Activated CD4-positive, alpha-beta memory T cell treated with anti-CD3 and anti-CD28 coated beads for 36 hours (primary cell): ENCODE measurements at regions of chr18 and their contacts with region 1.

Region 1: GRCh38 chr18:63320046-63320689 is 599 bp upstream of the BCL2 start:
- DNase-seq: peak; percentile 89
- H3K4me3 Mint-ChIP-seq: peak overlapping the region; percentile 83
- H3K27ac Mint-ChIP-seq: peak overlapping the region; percentile 83
- H3K4me1 Mint-ChIP-seq: peaks cover 26% of the 10 kb centered on the region
- H3K27me3 Mint-ChIP-seq: no peaks in the 10 kb centered on the region

Region 2: DNA sequence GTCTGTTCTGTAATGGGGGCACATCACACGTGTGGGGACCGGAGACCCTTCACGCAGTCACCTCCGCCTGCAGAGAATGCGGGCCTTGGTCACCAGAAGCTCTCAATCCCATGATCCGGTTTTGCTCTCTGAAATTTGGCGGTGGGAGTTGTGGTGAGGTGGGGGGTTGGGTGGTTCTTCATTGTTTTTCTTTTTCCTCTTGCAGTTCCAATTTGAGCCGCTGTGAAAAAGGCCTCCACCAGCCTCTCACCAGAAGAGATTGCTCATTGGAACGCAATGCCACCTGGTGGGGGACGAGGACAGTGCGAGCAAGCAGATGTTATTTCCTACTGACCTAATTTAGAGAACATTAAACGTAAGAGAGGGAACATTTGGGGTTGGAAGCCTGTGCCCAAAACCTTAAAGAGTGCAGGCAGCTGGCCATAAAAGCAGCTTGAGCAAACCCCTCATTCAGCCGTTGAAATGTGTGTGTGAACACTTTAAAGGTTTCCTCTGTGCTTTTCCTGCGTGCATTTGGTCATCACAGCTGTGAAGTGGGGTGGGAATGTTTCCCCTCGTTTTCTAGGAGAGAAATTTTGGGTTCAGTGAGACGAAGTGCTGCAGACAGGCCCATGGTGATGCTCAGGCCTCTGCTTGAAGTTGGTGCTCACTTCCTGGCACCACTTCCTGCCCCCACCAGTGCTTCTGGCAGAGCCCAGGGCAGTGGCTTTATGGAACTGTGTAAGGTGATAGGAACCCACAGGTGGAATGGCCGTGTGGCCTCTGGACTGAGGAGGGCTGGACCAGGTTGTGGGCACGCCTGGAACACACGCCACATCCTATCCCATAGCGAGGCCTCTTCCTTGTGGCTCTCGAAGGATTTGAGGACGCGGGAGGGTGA is 735.7 kb before region 1 on chr18:
- CTCF ChIA-PET with region 1: no interaction called
- POLR2A ChIA-PET with region 1: no interaction called
- intact Hi-C with region 1: loop called (anchors 5 kb)
- DNase-seq: peak; percentile 91
- H3K4me3 Mint-ChIP-seq: no peak overlapping the region
- H3K27ac Mint-ChIP-seq: peak overlapping the region; percentile 94
- H3K4me1 Mint-ChIP-seq: peaks cover 39% of the 10 kb centered on the region
- H3K27me3 Mint-ChIP-seq: no peaks in the 10 kb centered on the region

Region 3: DNA sequence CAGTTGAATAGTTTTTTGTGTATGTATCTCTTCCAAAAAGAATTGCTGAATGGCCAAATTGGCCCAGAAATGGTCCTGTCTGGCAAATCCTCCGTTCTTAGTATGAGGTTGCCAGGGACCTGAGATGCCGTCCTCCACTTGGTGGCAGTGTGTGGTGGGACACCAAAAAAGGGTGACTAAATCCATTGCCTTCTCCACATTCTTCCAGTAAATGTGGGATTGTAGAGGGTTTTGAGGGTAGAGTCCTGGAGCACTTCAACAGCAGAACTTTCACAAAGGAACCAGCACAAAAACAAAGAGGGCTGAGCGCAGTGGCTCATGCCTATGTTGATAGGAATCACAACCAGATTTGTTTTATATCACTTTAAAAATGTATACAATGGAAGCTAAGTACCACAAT is 200.5 kb before region 1 on chr18:
- CTCF ChIA-PET with region 1: interaction called, 19 read pairs
- POLR2A ChIA-PET with region 1: no interaction called
- intact Hi-C with region 1: loop called (anchors 1 kb)
- DNase-seq: peak; percentile 55
- H3K4me3 Mint-ChIP-seq: no peak overlapping the region
- H3K27ac Mint-ChIP-seq: no peak overlapping the region
- H3K4me1 Mint-ChIP-seq: peaks cover 10% of the 10 kb centered on the region
- H3K27me3 Mint-ChIP-seq: peaks cover 4% of the 10 kb centered on the region

Region 4: DNA sequence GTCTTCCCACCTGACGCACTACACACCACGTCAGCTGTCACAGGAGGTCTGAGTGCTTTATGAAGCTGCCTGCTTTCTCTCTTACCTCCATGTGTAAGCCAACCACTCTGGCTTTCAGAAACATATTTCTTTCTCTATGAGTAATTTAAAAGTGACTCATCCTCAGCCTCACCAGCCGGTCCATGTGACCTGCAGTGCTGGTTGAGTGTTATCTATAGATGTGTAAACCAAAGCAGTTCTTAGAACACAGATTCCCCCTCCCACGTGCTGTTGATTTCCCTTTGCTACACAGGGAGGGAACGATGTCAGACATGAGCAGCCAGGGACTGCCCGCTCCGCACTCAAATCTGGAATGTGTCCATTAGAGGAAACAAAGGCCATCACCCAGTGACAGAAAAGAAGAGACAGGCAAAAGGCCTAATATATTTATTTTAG is 158.4 kb before region 1 on chr18:
- CTCF ChIA-PET with region 1: interaction called, 101 read pairs
- POLR2A ChIA-PET with region 1: interaction called, 35 read pairs
- intact Hi-C with region 1: loop called (anchors 1 kb)
- DNase-seq: peak; percentile 90
- H3K4me3 Mint-ChIP-seq: peak overlapping the region; percentile 78
- H3K27ac Mint-ChIP-seq: peak overlapping the region; percentile 98
- H3K4me1 Mint-ChIP-seq: peaks cover 92% of the 10 kb centered on the region
- H3K27me3 Mint-ChIP-seq: no peaks in the 10 kb centered on the region

Region 5: DNA sequence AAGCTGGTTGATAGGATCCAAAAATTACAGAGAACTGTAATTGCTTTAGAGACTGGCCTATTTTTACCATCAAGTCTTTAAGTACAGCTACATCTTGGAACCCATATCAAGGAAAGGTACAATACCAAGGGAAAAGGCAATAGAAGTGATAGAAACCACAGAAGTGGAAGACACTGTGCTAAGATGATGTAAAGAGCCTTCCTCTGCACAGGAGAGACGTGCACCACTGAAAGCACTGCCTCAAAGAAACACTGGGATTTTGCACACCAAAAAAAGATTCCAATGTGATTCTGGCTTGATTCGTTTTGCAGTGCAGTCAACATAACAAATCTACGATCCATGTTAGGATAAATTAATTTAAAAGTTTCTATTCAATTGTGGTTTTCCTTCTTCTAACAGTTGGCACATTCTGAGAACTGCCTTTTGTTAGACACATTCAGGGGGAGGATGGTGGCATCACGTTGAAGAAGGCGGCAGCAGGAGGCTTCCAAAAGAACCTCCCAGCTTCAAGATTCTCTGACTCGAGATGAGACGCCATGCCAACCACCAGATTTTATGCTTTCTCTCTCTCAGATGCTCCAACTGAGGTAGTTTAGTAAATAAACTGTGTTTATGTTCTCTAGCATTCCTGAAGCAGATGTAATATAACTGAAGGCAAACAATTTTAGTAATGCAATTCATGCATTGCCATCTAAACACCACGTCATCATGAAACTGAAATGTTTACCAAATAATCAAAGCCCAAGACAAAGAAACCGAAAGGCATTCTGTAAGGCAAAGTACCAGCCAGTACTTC is 103.5 kb before region 1 on chr18:
- CTCF ChIA-PET with region 1: interaction called, 31 read pairs
- POLR2A ChIA-PET with region 1: interaction called, 9 read pairs
- intact Hi-C with region 1: loop called (anchors 1 kb)
- DNase-seq: peak; percentile 50
- H3K4me3 Mint-ChIP-seq: peak overlapping the region; percentile 64
- H3K27ac Mint-ChIP-seq: peak overlapping the region; percentile 93
- H3K4me1 Mint-ChIP-seq: peaks cover 95% of the 10 kb centered on the region
- H3K27me3 Mint-ChIP-seq: no peaks in the 10 kb centered on the region

Region 6: DNA sequence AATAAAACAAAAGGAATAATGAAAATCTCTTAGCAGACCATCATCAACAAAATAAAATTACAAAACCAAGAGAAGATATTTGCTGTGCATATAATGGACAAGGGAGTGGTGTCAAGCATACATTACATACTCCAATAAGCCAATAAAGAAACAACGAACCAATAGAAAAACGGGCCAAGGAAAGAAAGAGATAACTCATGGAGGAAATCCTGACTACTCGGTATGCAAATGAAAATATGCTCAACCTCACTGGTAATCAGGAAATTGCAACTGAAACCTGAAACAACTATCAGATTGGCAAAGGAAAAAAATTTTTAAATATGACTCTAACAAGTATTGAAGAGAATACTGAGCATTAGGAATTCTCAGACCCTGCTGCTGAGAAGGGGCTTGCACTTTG is 85.3 kb before region 1 on chr18:
- CTCF ChIA-PET with region 1: no interaction called
- POLR2A ChIA-PET with region 1: no interaction called
- intact Hi-C with region 1: no loop called
- DNase-seq: no peak
- H3K4me3 Mint-ChIP-seq: no peak overlapping the region
- H3K27ac Mint-ChIP-seq: peak overlapping the region; percentile 21
- H3K4me1 Mint-ChIP-seq: peaks cover 78% of the 10 kb centered on the region
- H3K27me3 Mint-ChIP-seq: no peaks in the 10 kb centered on the region

Region 7: GRCh38 chr18:63286926-63287325 is 33.2 kb before region 1 on chr18:
- CTCF ChIA-PET with region 1: interaction called, 15 read pairs
- POLR2A ChIA-PET with region 1: no interaction called
- intact Hi-C with region 1: loop called (anchors 1 kb)
- DNase-seq: no peak
- H3K4me3 Mint-ChIP-seq: no peak overlapping the region
- H3K27ac Mint-ChIP-seq: no peak overlapping the region
- H3K4me1 Mint-ChIP-seq: peaks cover 56% of the 10 kb centered on the region
- H3K27me3 Mint-ChIP-seq: no peaks in the 10 kb centered on the region

Region 8: DNA sequence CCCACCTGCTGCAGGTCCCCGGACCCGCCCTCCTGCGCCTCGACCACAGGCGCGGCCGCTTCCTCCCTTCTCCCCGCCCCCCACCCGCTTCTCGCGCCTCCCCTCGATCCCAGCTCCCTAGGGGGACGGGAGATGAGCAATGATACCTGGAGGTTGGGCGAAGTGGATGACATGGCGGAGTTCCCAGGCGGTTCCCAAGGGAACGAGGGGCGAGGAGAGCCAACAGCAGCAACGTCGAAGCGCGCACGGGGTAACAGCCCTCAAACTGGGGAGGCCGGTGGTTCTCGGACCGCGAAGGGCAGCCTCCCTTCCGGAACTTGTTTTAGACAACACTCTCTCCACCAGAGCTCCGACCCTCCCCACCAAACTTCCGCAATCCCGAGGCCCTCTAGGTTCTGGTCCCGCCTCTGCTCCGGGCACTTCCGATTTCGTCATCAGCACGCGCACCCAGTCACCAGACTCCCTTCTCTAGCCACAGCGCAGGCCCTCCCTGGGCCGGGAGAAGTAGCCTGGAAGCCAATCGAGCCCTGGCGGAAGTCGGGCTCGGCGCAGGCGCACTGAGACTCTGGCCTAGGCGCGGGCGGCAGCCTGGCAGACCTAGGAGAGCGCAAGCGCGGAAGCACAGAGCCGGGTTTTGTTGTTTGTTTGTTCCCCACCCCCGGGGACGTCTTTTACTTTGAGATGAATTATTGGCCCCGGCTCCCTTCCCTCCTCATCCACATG is 102.1 kb after region 1 on chr18 and contains the start of gene VPS4B:
- CTCF ChIA-PET with region 1: no interaction called
- POLR2A ChIA-PET with region 1: no interaction called
- intact Hi-C with region 1: loop called (anchors 1 kb)
- DNase-seq: peak; percentile 100
- H3K4me3 Mint-ChIP-seq: peak within 1 kb of the TSS; percentile 95
- H3K27ac Mint-ChIP-seq: peak within 1 kb of the TSS; percentile 97
- H3K4me1 Mint-ChIP-seq: peaks cover 33% of the 10 kb centered on the region
- H3K27me3 Mint-ChIP-seq: peaks cover 5% of the 10 kb centered on the region
- total RNA-seq, gene VPS4B: 41.7 to 43.3 TPM